ENCODE measurements at regions of chr1 and their contacts with region 1.

Region 1: GRCh38 chr1:53393325-53393792 is 65.5 kb upstream of the LRP8 start:
- DNase-seq: peak; percentile 82
- H3K4me3 ChIP-seq: no peak overlapping the region
- H3K27ac ChIP-seq: no peak overlapping the region
- H3K4me1 ChIP-seq: no peaks in the 10 kb centered on the region
- H3K27me3 ChIP-seq: peaks cover 0 to 6% (median 0%) of the 10 kb centered on the region in 3 donors
- CTCF ChIP-seq: peak; percentile 66 to 94 (median 88)
- EP300 ChIP-seq: no peak
- POLR2A ChIP-seq: no peak

Region 2: DNA sequence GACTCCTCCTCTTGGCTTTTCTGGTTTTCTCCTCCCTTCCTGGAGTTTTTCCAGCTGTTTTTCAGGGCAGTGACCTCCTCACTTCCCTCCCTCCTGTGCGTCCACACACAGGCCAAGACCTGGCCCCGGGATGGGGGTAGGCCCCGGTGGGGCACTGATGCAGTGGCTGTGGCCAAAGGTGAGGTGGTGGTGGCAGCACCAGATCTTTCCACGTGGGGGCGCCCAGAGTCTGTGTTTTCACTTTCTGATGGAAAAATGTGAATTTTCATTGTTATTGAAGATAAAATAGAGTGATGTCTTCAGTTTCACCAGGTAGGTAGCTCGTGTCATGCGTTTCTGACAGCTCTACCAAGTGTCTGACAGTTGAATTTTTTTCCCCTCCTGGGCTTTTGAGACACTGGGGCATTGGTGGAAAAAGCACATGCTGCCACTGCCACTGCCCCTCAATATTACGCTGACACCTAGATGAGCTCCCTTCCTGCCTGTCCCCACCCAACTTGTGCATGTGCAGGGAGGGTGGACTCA is 115.1 kb before region 1 on chr1:
- intact Hi-C with region 1: loop called (anchors 1 kb)
- DNase-seq: peak; percentile 73
- H3K4me3 ChIP-seq: no peak overlapping the region
- H3K27ac ChIP-seq: no peak overlapping the region
- H3K4me1 ChIP-seq: no peaks in the 10 kb centered on the region
- H3K27me3 ChIP-seq: peaks cover 0 to 13% (median 0%) of the 10 kb centered on the region in 3 donors
- CTCF ChIP-seq: peak; percentile 80 to 94 (median 88)
- EP300 ChIP-seq: no peak
- POLR2A ChIP-seq: no peak

Region 3: GRCh38 chr1:53473463-53473862 is 80.1 kb after region 1 on chr1:
- intact Hi-C with region 1: no loop called
- DNase-seq: no peak
- H3K4me3 ChIP-seq: no peak overlapping the region
- H3K27ac ChIP-seq: no peak overlapping the region
- H3K4me1 ChIP-seq: peaks cover 0 to 8% (median 4%) of the 10 kb centered on the region in 4 donors
- H3K27me3 ChIP-seq: no peaks in the 10 kb centered on the region
- CTCF ChIP-seq: no peak
- EP300 ChIP-seq: no peak
- POLR2A ChIP-seq: no peak

Measured in sigmoid colon (tissue), 7 donors.